ENCODE measurements at regions of chr7 and their contacts with region 1.

Region 1: DNA sequence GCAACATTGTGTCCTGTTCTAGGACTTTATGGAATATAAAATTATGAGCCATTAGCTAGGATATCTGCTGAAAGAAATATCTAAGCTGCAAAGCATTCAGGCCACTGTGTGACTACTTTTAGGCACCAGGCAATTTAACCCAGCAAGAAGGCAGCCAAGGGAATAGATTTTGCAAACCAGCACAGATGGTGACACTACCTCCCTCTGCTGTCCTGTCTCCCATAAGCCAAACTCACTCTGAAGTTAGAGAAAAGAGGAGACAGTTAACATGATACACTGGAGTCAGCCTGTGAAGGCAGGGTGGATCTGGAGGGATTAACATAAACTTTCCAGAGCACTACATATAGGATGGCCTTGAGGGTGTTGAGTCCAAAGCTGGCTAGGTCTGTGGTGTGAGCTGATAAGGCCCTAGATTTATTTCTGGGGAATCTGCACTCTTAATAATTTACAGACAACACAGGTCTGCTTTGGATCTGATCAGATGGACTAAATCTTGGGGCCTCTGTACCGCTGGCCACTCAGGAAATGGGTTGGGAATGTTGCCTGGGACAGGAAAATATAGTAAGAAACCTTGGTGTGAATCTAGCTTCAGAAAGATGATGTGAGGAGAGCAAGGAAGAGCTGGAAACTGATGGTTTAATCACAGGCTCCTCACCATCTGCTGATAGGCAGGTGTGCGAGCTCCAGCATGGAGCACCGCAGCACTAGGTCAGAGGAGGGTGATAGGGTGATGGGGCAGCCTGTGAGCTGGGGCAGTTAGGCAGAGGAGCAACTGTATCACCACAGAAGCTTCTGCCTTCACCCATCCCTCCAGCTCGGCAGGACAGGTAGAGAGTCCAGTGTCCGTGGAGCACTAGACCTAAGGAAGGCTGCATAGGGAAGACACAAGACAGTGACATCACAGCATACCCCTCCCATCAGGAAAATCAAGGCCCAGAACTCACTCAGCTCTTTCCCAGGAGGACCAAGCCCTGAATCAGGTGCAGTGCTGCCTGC is 229.9 kb upstream of the PRSS1 start:
- DNase-seq: no peak
- H3K4me3 ChIP-seq: no peak overlapping the region
- H3K27ac ChIP-seq: no peak overlapping the region
- H3K27me3 ChIP-seq: peaks cover 0 to 3% (median 0%) of the 10 kb centered on the region in 45 donors
- CTCF ChIP-seq: peak in 3 of 56 donors; percentile 9 to 14 (median 13)

Region 2: DNA sequence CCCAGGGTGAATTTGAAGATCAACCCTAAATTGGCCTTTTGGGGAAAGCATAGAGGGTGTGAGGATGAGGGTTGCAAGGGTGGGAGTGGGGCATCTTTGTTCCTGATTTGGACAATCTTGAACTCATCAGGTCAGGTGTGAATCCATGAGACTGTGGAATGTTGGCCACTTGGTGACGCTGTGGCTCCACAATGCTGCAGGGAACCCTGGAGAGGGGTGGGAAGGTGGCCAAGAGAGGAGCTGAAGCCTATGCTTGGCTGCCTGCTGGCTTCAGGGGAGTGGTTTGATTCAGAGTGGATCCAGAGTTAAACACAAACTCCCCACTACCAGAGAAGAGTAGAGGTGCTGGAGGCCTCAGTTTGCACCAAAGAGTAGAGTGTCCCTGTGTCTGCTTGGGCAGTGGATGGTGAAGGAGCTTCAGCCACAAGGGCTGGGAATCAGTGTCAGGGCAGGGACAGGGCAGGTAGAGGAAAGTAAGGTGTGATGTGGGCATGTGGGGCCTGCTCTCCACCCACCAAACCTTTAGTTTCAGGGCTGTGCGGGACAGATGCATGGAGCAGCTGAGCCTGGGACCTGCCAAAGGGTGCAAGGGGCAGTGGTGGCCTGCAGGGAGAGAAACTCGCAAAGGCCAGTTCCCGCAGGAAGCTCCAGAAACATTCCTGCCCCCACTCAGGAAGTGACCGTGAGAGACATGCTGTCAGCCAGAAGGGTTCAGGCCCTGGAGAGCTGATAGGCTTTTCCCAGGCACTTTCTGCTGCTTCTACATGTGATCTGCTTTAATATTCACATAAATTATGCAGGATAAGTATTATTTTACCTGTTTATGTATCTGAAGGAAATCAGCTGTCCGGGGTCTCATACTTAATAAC is 180.5 kb before region 1 on chr7:
- intact Hi-C with region 1: loop called in 1 of 2 experiments (anchors 10 kb)
- DNase-seq: peak in 5 of 10 donors; percentile 57 to 77 (median 66)
- H3K4me3 ChIP-seq: no peak overlapping the region
- H3K27ac ChIP-seq: no peak overlapping the region
- H3K27me3 ChIP-seq: peaks cover 0 to 4% (median 0%) of the 10 kb centered on the region in 45 donors
- CTCF ChIP-seq: peak in 45 of 56 donors; percentile 10 to 72 (median 43)

Region 3: DNA sequence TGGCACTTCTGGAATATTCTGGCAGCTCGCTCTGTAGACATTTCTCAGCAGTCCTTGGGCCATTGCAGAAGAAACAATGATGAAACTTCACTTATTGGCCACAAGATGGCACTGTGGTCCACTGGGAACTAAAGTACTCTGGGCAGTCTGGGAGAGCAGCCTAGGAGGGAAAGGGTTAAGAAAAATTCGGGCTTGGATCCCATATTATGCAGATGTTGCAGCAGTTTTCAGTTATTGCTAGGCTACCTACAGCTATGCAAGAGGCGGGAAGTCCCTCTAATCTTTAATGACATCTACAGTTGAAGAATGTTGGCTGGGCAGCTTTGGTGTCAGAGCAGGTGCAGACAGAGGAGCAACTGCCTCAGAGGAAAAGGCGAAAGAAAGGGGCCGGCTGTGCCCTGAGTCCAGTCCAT is 59.8 kb before region 1 on chr7:
- intact Hi-C with region 1: loop called in 1 of 2 experiments (anchors 10 kb)
- DNase-seq: peak in 1 of 10 donors; percentile 32
- H3K4me3 ChIP-seq: no peak overlapping the region
- H3K27ac ChIP-seq: no peak overlapping the region
- H3K27me3 ChIP-seq: peaks cover 0 to 4% (median 0%) of the 10 kb centered on the region in 45 donors
- CTCF ChIP-seq: peak; percentile 55 to 90 (median 82)

Region 4: DNA sequence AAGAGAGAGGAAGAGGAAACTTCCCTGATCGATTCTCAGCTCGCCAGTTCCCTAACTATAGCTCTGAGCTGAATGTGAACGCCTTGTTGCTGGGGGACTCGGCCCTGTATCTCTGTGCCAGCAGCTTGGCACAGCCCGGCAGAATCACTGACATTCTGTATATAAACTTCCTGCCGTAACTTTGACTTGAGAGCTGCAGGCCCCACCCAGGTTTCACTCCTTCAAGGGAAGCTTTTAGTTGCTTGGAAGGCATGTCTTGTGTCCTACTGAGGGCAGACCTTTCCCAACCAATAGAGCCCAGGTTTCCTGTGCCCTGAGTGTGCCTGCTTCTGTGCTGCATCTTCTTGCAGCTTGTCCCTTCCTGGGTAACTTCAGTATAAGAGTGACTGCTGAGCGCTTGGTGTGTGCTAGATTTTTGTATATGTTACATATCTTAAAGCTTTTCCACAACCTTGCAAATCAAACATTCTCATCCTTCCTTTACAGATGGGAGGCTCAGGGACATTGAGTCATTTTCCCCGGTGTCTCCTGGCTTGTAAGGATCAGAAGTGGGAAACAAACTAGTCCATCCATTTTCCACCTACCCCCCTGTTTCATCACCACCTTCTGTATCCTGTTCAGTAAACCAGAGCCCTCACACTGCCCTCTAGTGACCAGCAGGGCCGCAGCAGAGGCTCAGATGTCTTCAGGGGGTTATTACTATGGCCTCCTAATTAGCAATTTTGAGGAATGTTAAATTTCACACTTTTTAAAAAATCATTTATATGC is 36.3 kb before region 1 on chr7:
- intact Hi-C with region 1: loop called in 1 of 2 experiments (anchors 5 kb)
- DNase-seq: peak in 7 of 10 donors; percentile 40 to 71 (median 62)
- H3K4me3 ChIP-seq: no peak overlapping the region
- H3K27ac ChIP-seq: no peak overlapping the region
- H3K27me3 ChIP-seq: peaks cover 0 to 4% (median 0%) of the 10 kb centered on the region in 45 donors
- CTCF ChIP-seq: peak in 55 of 56 donors; percentile 32 to 86 (median 68)

Region 5: DNA sequence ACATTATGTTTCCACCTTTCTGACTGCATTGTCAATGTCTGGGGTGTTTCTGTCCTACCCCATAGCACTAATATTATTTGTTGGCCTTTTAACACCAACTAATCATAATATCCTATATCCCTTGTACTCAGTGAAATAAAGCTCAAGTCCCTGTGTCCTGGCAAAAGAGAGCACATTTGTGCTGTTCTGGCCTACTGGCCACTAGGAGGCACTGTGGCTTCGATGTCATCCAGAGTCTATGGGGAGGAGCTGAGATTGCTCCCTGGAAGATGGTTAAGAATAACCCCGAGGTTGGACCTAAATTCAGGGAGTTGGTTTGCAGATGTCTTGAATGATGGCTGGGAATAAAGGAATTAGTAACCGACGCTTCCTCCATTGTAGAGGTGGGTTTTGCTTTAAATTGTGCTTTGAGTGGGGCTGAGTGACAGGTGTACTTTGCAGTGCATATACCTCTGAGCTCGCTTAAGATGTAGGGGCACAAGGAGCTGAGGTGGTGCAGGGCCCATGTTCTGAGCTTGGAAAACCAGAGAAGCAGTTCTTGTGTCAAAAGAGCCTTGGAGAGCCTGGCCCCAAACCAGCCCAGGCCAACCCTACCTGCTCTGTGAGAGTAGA is 38.7 kb after region 1 on chr7:
- intact Hi-C with region 1: no loop called
- DNase-seq: no peak
- H3K4me3 ChIP-seq: no peak overlapping the region
- H3K27ac ChIP-seq: no peak overlapping the region
- H3K27me3 ChIP-seq: peaks cover 0 to 10% (median 0%) of the 10 kb centered on the region in 45 donors
- CTCF ChIP-seq: peak in 53 of 56 donors; percentile 11 to 60 (median 45)

Measured in dorsolateral prefrontal cortex (tissue), 120 donors.